Right ventricle myocardium inferior (tissue), 1 donor: ENCODE measurements at regions of chr1 and their contacts with region 1.

Region 1: GRCh38 chr1:8727809-8728213 is 89.6 kb downstream of the RERE start:
- DNase-seq: peak; percentile 76
- ATAC-seq: peak; percentile 83

Region 2: DNA sequence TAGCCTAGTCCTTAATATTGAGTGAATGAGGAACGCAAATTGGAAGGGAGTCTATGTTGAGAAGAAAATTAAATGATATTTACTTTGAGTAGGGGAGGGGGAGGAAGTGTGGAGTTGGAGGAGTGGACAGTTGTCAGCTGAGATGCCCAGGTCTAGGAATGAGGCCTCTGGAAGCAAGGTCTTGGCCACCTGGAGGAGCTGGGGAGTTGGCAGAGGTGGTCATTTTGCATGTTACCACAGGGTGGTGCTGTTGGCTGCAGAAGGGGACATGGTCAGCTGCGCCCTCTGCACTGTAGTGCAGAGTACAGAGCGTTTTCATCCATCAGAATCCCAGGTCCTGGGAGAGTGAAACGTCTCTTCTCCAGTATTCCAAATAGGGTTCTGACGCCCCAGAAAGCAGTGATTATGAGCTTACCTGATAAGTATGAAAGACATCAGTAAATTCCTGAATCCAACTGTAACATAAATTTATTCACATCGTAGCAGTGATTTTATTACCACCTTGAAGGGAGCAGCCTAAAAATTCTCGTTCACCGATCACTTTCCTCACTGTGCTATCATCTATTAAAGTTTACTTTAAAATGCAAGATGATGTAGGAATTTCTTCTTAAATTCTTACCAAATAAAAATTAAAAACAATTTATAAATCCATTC is 752.5 kb before region 1 on chr1:
- intact Hi-C with region 1: loop called (anchors 5 kb)
- DNase-seq: no peak
- ATAC-seq: peak; percentile 97

Region 3: DNA sequence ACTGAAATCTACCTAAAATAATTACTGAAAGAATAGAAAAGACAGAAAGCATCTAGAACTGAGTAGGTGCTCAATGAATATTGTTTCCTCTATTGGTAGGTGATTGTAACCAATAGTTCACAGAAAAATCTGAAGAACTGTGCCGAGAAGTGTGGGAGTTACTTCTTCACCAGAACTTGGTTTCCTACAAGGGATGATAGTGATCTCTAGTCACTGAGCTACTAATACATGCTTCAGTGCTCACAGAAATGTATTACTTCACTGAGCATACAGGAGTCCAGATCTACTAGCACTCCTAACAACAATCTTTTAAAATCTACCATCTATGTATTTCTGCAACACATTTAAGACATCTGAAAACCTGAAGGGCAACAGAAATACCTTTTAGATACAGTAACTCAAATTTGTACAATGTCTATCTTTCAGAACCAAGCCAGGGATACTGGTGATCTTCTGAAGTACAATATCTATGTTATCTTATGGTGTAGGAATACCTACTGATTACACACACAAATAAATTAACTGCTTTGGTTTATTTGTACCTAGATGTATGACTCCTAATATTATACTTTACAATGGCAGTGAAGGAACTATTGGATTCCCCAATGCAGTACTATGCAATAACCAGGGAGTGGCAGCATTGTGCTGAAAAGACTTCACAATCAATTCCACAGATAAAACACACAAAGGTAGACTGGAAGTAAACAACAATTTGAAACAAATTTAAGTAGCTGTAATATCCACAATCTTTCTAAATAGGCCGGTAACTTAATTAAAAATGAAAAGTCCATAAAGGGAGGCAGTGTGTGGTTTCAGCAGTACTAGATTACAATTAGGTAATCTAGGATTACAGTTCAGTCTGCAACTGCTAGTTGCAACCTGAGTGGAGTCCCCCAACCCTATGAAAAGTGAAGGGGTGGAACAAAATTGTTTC is 166.9 kb before region 1 on chr1:
- intact Hi-C with region 1: loop called (anchors 1 kb)
- DNase-seq: no peak
- ATAC-seq: peak; percentile 60

Region 4: DNA sequence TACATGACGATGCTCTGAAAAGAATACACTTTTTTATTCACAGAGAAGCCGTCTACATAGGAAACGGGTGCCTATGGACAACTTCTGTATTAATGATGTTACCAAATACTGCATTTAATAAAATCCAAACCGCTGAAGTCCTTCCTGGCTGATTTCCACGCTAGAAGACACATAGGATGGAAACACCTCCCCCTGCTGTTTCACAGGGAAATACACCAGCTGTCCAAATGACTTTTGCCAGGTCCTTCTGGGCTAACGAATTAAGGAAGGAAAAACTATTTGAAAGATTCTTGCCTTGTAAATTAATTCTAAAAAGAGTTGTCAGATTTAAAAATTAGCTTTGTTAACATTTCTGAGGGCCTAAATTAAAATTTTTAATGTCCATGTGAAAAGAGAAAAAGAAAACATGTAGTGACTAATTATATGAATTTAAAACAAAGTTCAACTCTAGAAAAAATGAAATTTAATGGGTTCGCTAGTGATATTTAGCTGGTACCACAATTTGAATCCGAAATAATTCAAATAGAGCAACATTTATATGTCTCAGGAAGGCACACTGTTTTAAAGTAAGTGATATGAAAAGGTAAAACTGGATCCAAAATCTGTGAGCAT is 56.4 kb before region 1 on chr1:
- intact Hi-C with region 1: loop called (anchors 5 kb)
- DNase-seq: no peak
- ATAC-seq: peak; percentile 67

Region 5: DNA sequence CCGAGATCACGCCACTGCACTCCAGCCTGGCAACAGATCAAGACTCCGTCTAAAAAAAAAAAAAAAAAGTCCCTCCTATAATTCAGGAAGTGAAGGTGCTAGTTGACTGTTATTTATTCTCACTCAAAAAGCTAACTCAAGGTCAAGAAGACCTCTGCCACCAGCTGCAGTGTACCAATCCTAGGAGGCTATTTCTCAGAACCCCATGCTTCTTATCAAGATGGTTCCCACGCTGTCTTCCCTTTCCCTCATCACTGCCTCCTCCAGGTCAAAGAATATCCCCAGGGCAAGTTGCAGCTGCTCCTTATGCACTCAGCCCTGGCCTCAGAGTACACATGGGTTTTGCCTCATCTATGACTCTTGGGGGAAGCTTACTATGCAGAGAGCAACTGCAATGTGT is 36.1 kb after region 1 on chr1:
- intact Hi-C with region 1: no loop called
- DNase-seq: no peak
- ATAC-seq: no peak